Activated T-helper 1 cell treated with anti-CD3 and anti-CD28 coated beads, Interleukin-12 subunit alpha, Interleukin-12 subunit beta, Interleukin-2, Interleukin-4 antibody, amounts not matched to agents 30 ng/mL and 10 ng/mL and 1 ng/mL, durations not matched to agents 14 hours and 24 hours and 36 hours (primary cell): ENCODE measurements at regions of chr16 and their contacts with region 1.

Region 1: DNA sequence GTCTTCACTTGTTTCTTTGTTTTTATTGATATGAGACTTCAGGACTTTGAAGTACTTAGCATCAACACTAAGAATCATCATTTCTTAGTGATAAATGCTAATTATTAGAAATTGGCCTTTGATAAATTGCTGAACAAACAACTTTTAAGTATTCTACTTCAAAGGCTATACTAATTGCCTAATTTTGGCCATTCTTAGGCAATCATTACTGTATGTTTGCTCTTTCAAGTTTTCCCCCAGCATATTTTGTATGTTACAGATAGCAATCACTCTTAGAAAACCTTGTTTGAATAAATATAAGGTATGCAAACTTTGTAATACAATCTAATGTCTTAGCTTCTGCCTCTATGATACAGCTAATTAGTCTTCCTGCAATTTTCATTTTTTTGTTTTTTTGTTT is 46.0 kb downstream of the NQO1 start:
- DNase-seq: no peak
- H3K4me3 Mint-ChIP-seq: no peak overlapping the region
- H3K27ac Mint-ChIP-seq: no peak overlapping the region
- H3K4me1 Mint-ChIP-seq: no peaks in the 10 kb centered on the region
- H3K27me3 Mint-ChIP-seq: no peaks in the 10 kb centered on the region

Region 2: GRCh38 chr16:69494993-69495392 is 185.4 kb before region 1 on chr16:
- intact Hi-C with region 1: loop called (anchors 10 kb)
- DNase-seq: peak; percentile 10
- H3K4me3 Mint-ChIP-seq: no peak overlapping the region
- H3K27ac Mint-ChIP-seq: no peak overlapping the region
- H3K4me1 Mint-ChIP-seq: peaks cover 8% of the 10 kb centered on the region
- H3K27me3 Mint-ChIP-seq: peaks cover 2% of the 10 kb centered on the region

Region 3: DNA sequence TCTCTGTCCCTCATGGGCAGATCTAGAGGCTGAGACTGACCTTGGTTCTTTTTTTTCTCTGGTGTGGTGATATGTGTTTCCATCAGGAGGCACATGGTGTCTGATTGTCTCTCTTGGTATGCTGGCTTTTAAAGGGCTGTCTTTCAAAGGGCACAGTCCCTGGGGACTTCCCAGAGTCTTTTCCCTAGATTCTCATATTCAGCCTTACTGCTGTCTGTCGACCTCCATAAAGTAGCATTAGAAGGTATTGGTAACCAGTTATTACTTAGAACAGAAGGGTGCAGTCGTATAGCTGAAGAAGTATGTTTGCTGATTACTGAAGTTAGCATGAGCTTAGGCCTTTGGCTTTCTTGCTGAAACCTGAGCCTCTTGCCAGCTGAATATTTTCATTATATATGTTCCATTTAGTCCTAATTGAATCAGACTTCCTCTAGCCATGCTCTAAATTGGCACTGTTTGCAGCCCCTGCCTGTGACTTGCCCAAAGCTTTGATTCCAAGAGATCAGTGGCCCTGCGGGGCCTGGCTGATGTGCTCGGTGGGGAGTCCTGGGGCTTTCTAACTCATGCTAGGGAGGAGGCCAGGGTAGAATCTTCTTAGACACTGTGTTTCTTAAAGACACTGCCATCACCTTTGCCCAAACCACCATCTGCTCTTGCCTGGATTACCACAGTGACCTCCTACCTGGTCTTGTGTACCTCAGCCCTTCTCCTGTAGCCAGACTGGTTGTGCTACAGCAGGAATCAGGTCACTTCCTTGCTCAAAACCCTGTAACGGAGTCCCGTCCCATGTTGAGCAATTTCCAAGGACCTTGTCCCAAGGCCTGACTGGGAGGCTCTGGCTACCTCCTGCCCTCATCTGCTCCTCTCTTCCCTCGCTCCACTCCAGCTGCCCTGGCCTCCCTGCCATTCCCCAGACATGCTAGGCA is 153.3 kb after region 1 on chr16:
- intact Hi-C with region 1: no loop called
- DNase-seq: no peak
- H3K4me3 Mint-ChIP-seq: no peak overlapping the region
- H3K27ac Mint-ChIP-seq: no peak overlapping the region
- H3K4me1 Mint-ChIP-seq: no peaks in the 10 kb centered on the region
- H3K27me3 Mint-ChIP-seq: no peaks in the 10 kb centered on the region